Activated T-helper 2 cell treated with anti-CD3 and anti-CD28 coated beads, Interferon-gamma antibody, Interleukin-2, Interleukin-4, amounts not matched to agents 10 μg/mL and 5 μg/mL and 100 μg/mL, durations not matched to agents 14 hours and 24 hours and 36 hours (primary cell): ENCODE measurements at regions of chr2 and their contacts with region 1.

Region 1: DNA sequence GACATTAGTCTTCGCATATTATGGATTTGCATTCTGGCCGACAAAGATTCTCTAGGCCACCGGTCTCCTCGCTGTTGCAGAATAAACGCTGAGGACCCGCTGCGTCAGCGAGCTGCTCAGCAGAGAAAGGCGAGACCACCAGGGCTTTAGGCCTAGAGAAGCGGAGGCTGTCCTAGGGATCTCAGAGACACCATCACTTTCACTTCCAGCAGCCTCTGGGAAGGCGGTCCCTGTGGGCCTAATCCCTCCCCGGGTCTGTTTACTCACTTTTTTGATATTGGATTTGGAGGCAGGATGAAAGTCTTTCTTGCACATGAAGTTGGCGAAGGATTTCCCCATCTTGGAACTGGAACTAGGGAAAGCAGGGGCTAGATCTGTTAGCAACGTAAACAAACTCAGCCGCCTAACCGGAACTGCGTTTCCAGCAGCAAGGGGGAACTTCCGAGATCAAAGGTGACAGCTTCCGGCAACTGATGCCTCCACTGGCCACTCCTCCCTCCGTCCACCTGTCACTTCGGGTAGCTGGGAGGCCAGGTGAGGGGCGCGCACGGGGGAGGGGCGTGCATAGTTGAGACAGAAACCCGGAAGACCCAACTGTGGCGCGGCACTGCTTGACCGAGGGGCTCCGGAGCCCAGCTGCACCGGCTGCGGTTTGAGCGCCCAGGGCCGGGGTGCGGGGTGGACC is at the start of gene SCRN3:
- DNase-seq: peak; percentile 70
- H3K4me3 Mint-ChIP-seq: peak within 1 kb of the TSS; percentile 99
- H3K27ac Mint-ChIP-seq: peak within 1 kb of the TSS; percentile 99
- H3K4me1 Mint-ChIP-seq: peaks cover 27% of the 10 kb centered on the region
- H3K27me3 Mint-ChIP-seq: no peaks in the 10 kb centered on the region
- total RNA-seq, gene SCRN3: 17.3 and 17.4 TPM in 2 replicates

Region 2: GRCh38 chr2:174248187-174248997 is 147.0 kb before region 1 on chr2 and contains the start of gene OLA1:
- intact Hi-C with region 1: loop called (anchors 5 kb)
- DNase-seq: peak; percentile 94
- H3K4me3 Mint-ChIP-seq: peak within 1 kb of the TSS; percentile 87
- H3K27ac Mint-ChIP-seq: peak within 1 kb of the TSS; percentile 86
- H3K4me1 Mint-ChIP-seq: peaks cover 29% of the 10 kb centered on the region
- H3K27me3 Mint-ChIP-seq: no peaks in the 10 kb centered on the region
- total RNA-seq, gene OLA1: 148 and 150 TPM in 2 replicates

Region 3: GRCh38 chr2:174492963-174493431 is 97.6 kb after region 1 on chr2:
- intact Hi-C with region 1: loop called (anchors 5 kb)
- DNase-seq: peak; percentile 52
- H3K4me3 Mint-ChIP-seq: peak overlapping the region; percentile 68
- H3K27ac Mint-ChIP-seq: peak overlapping the region; percentile 92
- H3K4me1 Mint-ChIP-seq: peaks cover 54% of the 10 kb centered on the region
- H3K27me3 Mint-ChIP-seq: no peaks in the 10 kb centered on the region

Region 4: DNA sequence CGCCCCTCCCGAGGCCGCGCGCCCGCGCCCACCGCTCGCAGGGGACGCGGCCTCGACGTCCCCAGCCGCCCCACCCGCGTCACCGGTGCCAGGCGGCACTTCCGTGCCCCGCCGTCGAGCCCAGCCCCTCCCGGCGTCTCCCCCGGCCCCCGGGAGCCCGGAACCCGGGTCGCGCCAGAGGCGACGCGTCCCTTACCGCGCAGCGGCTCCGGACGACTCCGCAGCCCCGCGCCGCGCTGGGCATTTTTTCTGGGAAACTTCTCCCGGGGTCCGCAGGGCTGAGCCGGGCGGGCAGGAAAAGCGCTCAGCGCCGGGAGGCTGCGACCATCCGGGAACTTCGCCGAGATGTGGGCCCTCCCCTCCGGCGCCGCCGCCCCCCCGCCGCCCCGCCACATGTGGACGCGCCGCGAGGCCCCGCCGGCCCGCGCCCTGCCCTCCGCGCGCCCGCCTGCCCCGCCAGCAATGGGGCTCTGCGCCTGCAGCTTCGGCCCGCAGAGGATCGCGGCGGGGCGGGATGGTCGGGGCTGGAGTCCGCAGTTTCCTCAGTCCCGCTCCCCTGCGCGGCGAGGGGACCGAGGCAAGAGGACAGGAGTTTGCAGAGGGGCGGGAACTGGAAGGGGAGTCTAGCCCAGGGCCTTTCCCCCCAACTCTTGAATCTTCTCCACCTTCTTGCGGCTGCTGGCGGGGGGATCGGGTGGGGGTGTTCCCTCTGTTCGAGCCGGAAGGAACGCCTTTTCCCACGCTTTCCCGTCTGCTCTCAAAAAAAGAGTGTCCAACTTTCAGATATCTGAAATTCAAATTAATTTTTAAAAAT is 287.4 kb after region 1 on chr2:
- intact Hi-C with region 1: loop called (anchors 10 kb)
- DNase-seq: peak; percentile 48
- H3K4me3 Mint-ChIP-seq: peak overlapping the region; percentile 89
- H3K27ac Mint-ChIP-seq: peak overlapping the region; percentile 91
- H3K4me1 Mint-ChIP-seq: peaks cover 28% of the 10 kb centered on the region
- H3K27me3 Mint-ChIP-seq: peaks cover 7% of the 10 kb centered on the region

Region 5: DNA sequence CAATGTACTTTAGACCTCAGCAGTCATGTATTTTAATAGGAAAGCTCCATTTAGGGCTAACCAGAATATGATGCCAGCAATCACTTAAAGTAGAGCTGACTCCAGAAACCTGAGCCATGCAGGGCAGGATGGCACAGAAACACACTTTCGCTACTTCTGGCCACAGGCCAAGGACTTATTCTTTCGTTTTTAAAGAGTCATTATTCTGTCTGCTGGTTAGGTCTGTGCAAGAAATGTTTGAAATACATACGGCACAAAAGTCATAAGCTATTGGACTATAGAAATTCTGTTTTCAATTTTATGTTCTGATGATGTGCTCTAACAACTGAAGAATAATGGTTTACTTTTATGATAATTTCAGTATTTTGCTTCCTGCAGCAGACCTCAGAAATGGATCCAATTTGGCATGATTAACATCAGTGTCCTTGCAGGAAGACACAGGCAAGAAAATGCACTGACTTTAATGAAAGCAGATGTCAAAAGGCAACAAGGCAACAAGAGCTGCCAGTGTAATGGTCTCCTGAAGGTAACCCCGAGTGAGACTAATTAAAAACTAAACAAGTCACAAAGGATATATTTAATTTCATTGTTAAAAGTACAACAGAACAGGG is 483.2 kb after region 1 on chr2:
- intact Hi-C with region 1: no loop called
- DNase-seq: no peak
- H3K4me3 Mint-ChIP-seq: no peak overlapping the region
- H3K27ac Mint-ChIP-seq: no peak overlapping the region
- H3K4me1 Mint-ChIP-seq: no peaks in the 10 kb centered on the region
- H3K27me3 Mint-ChIP-seq: peaks cover 2% of the 10 kb centered on the region